ENCODE measurements at regions of chr1 and their contacts with region 1.

Region 1: DNA sequence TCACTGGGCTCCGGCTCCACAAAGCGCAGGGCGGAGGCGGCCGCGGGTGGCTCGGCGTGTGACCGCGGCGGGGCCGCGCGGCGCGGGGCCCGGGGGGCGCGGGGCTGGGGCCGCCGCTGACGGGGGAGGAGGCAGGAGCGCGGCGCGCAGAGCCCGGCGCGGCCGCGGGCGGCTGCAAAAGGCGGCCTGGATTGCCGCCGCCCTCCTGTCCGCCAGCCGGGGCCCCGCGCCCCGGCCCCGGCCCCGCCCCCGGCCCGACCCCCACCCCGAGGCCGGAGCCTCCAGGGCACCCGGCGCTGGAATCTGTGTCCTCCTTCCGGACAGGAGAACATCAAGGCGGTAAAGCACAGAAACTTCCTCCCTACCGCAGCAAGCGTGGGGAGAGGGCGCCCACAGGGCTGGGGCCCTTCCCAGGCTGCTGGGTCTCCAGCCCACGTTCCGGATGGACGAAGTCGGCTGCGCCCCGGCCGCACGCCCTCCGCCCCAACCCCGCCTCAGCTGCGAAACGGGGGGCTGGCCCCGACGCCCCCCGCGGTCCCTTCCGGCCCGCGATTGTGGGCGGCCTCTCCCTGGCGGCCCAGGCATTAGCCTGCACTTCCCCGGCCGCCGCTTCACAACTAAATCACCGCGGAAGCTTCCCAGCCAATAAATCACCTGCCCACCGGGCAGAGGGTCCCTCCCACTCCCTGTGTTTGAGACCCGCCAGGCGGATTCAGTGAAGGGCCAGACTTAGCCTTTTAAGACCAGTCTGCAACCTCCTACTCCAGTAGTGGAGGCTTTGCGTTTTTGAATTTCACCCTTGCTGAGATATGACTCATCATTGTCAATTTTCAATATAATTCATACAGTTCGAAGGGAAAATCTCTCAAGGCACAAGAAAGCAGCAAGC is 106.0 kb downstream of the SLC45A1 start:
- DNase-seq: peak; percentile 66 to 90 (median 84)
- ATAC-seq: peak; percentile 77
- H3K4me3 ChIP-seq: peak overlapping the region; percentile 66
- H3K27ac ChIP-seq: peak overlapping the region; percentile 71
- H3K4me1 ChIP-seq: peaks cover 17 to 24% of the 10 kb centered on the region in 2 experiments
- H3K27me3 ChIP-seq: no peaks in the 10 kb centered on the region
- CTCF ChIP-seq: no peak
- EP300 ChIP-seq: no peak
- POLR2A ChIP-seq: no peak; the same call in 1 of the 2 replicates
- RAD21 ChIP-seq: no peak

Region 2: DNA sequence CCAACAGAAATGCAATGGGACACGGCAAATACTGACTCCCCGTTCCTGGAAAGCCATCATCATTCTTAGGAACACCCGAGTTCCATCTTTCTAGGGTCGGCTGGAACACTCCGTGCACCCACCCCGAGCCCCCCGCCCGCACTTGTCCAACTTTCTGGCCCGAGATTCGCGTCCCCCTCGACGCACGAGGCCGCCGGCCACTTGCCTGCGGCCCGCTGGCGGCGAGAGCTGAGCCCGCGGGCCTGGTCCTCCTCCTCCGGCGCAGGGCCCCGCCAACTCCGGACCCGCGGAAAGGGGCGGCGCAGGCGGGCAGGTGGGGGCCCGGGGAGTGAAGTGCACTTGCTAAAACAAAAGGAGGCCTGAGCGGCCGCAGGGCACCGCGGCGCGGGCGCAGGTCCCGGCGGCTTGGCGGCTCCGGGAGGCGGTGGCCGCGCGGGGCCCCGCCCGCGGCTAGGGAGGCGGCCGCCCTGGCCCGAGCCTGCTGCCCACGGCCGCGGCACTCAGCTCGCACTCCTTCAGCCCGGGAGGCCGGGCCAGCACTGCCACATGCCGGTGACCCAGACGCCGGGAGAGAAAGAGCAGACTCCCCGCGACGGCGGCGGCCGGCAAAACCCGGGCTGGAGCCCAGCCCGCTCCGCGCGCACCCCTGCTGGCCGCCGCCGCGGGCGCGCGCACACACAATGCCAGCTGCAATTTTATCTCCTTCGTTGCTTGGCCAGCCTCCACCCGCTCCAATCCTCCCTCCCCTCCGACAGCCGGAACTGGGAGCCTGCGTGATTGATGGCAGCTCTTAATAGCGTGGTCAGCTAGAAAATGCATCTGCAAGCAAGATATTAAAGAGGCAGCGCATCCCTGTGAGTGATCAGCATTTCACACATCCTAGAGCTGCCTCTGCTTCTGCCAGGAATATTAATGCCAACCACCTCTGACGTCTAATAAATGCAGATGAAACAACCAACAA is 279.2 kb after region 1 on chr1:
- CTCF ChIA-PET with region 1: no interaction called
- POLR2A ChIA-PET with region 1: no interaction called
- in situ Hi-C with region 1: no loop called
- intact Hi-C with region 1: loop called (anchors 10 kb)
- DNase-seq: peak; percentile 92 to 93 (median 93)
- ATAC-seq: peak; percentile 92
- H3K4me3 ChIP-seq: peak overlapping the region; percentile 59
- H3K27ac ChIP-seq: peak overlapping the region; percentile 61; the same call in 2 of the 3 replicates
- H3K4me1 ChIP-seq: peaks cover 18 to 33% of the 10 kb centered on the region in 2 experiments
- H3K27me3 ChIP-seq: no peaks in the 10 kb centered on the region
- CTCF ChIP-seq: peak; percentile 7 to 61 (median 42); a peak in 4 of 6 replicates
- EP300 ChIP-seq: peak; percentile 62
- POLR2A ChIP-seq: no peak
- RAD21 ChIP-seq: peak; percentile 33 to 59; a peak in 3 of 4 replicates